ENCODE measurements at regions of chr9 and their contacts with region 1.

Region 1: DNA sequence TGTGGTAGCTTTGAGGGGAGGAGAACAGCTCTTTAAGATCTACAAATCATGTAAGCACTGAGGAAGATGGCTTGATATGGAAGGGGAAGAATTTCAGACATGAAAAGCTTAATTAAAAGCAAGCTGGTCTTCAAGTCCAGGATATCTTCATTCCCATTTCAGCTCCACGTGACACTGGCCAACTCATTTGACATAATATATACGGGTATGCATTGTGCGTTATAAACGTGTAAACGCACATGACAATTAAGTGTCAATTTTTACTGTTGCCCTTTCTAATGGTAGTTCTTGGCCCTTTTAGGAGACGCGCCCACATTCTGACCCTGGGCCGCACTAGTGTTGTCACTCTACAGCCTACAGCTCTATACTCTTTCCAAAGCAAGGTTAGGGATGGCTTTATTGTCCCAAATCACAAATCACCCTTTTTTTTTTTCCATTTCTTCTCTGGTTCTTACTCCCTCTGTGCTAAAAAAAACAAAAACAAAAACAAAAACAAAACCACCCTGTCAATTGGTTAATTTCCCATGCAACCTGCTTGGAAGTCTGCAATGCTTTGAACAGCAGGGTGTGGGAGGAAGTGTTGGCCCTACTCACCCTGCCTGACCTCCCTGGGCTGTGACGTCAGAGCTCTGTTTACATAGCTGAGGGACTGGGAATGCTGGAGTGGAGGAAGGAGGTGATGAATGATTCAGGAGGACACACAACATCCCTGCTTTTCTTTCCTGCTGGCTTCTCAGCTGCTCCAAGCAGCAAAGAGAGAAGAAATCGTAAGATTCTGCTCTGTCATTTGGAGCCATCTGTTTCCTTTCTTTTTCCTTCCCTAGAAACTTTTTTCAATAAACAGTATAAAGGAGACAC is 19.3 kb downstream of the RFK start:
- DNase-seq: peak; percentile 85 to 92
- H3K4me3 ChIP-seq: no peak overlapping the region
- H3K27ac ChIP-seq: peak overlapping the region; percentile 36
- H3K4me1 ChIP-seq: peaks cover 71% of the 10 kb centered on the region
- H3K27me3 ChIP-seq: no peaks in the 10 kb centered on the region
- CTCF ChIP-seq: no peak

Region 2: GRCh38 chr9:75890472-75891276 is 484.3 kb before region 1 on chr9 and contains the start of gene PCSK5:
- CTCF ChIA-PET with region 1: no interaction called
- POLR2A ChIA-PET with region 1: no interaction called
- intact Hi-C with region 1: loop called (anchors 10 kb)
- DNase-seq: peak; percentile 88 to 89
- H3K4me3 ChIP-seq: peak within 1 kb of the TSS; percentile 76
- H3K27ac ChIP-seq: peak within 1 kb of the TSS; percentile 92
- H3K4me1 ChIP-seq: peaks cover 32% of the 10 kb centered on the region
- H3K27me3 ChIP-seq: no peaks in the 10 kb centered on the region
- CTCF ChIP-seq: peak; percentile 35; the same call in 1 of the 2 replicates
- total RNA-seq, gene PCSK5: 8.2 and 9.8 TPM in 2 replicates

Region 3: GRCh38 chr9:76181020-76181641 is 193.8 kb before region 1 on chr9:
- CTCF ChIA-PET with region 1: no interaction called
- POLR2A ChIA-PET with region 1: interaction called, 6 read pairs
- intact Hi-C with region 1: loop called (anchors 1 kb)
- DNase-seq: peak; percentile 62 to 99
- H3K4me3 ChIP-seq: peak overlapping the region; percentile 37; the same call in 1 of the 2 replicates
- H3K27ac ChIP-seq: peak overlapping the region; percentile 76
- H3K4me1 ChIP-seq: peaks cover 22% of the 10 kb centered on the region
- H3K27me3 ChIP-seq: no peaks in the 10 kb centered on the region
- CTCF ChIP-seq: no peak

Region 4: DNA sequence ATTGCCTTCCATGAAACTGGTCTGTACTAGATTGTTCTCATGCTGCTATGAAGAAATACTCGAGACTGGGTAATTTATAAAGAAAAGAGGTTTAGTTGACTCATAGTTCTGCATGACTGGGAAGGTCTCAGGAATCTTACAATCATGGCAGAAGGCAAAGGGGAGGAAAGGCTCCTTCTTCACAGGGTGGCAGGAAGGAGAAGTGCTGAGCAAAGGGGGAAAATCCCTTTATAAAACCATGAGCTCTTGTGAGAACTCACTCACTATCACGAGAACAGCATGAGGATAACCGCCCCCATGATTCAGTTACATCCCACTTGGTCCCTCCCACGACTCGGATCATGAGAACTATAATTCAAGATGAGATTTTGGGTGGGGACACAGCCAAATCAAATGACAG is 143.9 kb before region 1 on chr9:
- CTCF ChIA-PET with region 1: no interaction called
- POLR2A ChIA-PET with region 1: no interaction called
- intact Hi-C with region 1: no loop called
- DNase-seq: no peak
- H3K4me3 ChIP-seq: no peak overlapping the region
- H3K27ac ChIP-seq: no peak overlapping the region
- H3K4me1 ChIP-seq: no peaks in the 10 kb centered on the region
- H3K27me3 ChIP-seq: no peaks in the 10 kb centered on the region
- CTCF ChIP-seq: no peak

Region 5: DNA sequence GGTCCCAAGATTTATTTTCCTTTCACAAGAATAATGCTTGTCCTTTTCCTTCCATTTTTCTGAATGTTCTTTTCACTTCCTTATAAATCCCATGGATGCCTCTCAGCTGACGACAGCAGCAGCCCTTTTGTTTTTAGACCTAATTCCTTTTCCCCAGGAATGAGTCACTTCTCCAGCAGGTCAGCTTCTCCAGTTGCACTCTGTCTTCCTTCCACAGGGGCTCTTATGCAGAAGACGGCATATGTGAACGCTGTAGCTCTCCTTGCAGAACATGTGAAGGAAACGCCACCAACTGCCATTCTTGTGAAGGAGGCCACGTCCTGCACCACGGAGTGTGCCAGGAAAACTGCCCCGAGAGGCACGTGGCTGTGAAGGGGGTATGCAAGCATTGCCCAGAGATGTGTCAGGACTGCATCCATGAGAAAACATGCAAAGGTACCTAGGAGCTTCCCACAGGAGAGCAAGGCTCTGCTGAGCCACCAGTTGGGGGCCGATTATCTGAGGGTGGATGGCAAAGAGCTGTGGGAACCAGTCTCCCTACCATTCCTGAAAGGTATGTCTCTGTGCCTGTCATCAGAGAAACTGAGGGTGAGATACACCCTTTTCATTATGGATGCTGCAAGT is 53.6 kb before region 1 on chr9:
- CTCF ChIA-PET with region 1: no interaction called
- POLR2A ChIA-PET with region 1: interaction called, 7 read pairs
- intact Hi-C with region 1: loop called (anchors 1 kb)
- DNase-seq: peak; percentile 58 to 86
- H3K4me3 ChIP-seq: no peak overlapping the region
- H3K27ac ChIP-seq: peak overlapping the region; percentile 82
- H3K4me1 ChIP-seq: peaks cover 34% of the 10 kb centered on the region
- H3K27me3 ChIP-seq: no peaks in the 10 kb centered on the region
- CTCF ChIP-seq: no peak

Region 6: GRCh38 chr9:76393963-76394679 is 19.2 kb after region 1 on chr9 and contains the start of gene RFK:
- CTCF ChIA-PET with region 1: interaction called, 11 read pairs
- POLR2A ChIA-PET with region 1: interaction called, 5 read pairs
- intact Hi-C with region 1: loop called (anchors 1 kb)
- DNase-seq: peak; percentile 82 to 97
- H3K4me3 ChIP-seq: peak within 1 kb of the TSS; percentile 79
- H3K27ac ChIP-seq: peak within 1 kb of the TSS; percentile 85
- H3K4me1 ChIP-seq: peaks cover 22% of the 10 kb centered on the region
- H3K27me3 ChIP-seq: no peaks in the 10 kb centered on the region
- CTCF ChIP-seq: peak; percentile 53; the same call in 1 of the 2 replicates
- total RNA-seq, gene RFK: 20.6 and 24.4 TPM in 2 replicates

Region 7: GRCh38 chr9:76433836-76434235 is 58.9 kb after region 1 on chr9:
- CTCF ChIA-PET with region 1: no interaction called
- POLR2A ChIA-PET with region 1: no interaction called
- intact Hi-C with region 1: no loop called
- DNase-seq: peak in 1 of 2 experiments; percentile 46
- H3K4me3 ChIP-seq: no peak overlapping the region
- H3K27ac ChIP-seq: peak overlapping the region; percentile 4; the same call in 1 of the 2 replicates
- H3K4me1 ChIP-seq: peaks cover 14% of the 10 kb centered on the region
- H3K27me3 ChIP-seq: no peaks in the 10 kb centered on the region
- CTCF ChIP-seq: no peak